ENCODE measurements at regions of chr11 and their contacts with region 1.

Region 1: GRCh38 chr11:14288189-14288935 is 70.6 kb downstream of the RRAS2 start:
- DNase-seq: no peak
- ATAC-seq: peak; percentile 42
- H3K4me3 Mint-ChIP-seq: no peak overlapping the region
- H3K27ac Mint-ChIP-seq: no peak overlapping the region
- H3K4me1 Mint-ChIP-seq: peaks cover 5% of the 10 kb centered on the region
- H3K27me3 Mint-ChIP-seq: no peaks in the 10 kb centered on the region

Region 2: DNA sequence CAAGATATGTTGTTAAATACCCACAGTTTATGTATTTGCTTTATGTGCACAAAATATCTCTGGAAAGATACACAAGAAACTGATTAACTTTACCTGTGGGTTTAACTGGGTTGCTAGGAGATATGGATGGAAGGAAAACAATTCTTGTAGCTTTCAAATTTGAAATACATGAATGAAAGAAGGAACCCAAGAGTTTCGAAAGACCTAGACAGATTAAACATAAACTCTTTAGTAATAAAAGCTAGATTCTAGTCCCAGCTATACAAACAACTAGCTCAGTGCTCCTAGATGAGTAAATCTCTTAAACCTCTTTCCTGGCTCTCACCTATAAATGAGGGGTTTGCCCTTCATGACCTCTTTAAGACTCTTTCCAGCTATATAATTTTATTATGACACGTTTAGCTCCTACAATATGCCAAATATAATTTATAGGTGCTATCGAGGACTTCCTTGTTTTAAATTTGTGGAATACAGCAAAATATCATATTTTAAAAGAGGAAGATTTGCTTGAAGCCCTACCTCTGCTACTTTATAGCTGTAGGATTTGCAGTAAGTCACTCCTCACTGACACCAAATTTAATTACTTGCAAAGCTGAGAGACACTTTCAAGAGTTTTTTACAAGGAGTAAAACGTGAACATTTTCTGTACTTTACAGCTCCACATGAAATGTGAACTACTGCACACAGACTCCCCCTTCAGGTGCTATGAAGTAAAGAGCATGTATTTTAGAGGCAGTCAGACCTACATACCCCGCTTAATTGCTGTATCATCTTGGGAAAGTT is 19.9 kb after region 1 on chr11:
- CTCF ChIA-PET with region 1: interaction called, 12 read pairs
- POLR2A ChIA-PET with region 1: interaction called, 3 read pairs
- intact Hi-C with region 1: no loop called
- DNase-seq: no peak
- ATAC-seq: peak; percentile 86
- H3K4me3 Mint-ChIP-seq: no peak overlapping the region
- H3K27ac Mint-ChIP-seq: no peak overlapping the region
- H3K4me1 Mint-ChIP-seq: peaks cover 10% of the 10 kb centered on the region
- H3K27me3 Mint-ChIP-seq: no peaks in the 10 kb centered on the region

Region 3: DNA sequence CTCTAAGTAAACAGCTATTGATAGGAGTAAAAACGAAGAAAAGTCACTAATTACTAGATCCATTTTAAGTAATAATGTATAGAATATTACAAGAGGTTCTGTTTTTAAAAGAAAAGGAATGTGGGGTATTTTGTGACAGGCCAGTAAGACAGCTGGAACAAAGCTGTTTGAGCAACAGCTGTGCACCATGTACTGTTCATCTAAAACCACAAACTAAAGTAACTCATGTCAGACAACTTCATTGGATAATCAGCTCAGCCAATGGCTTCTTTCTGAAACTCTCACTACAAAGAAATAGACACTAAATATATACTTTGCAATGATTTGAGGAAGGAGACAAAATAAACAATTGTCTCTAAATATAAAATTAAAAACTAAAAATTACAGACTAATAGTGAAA is 54.5 kb after region 1 on chr11:
- CTCF ChIA-PET with region 1: no interaction called
- POLR2A ChIA-PET with region 1: no interaction called
- intact Hi-C with region 1: no loop called
- DNase-seq: no peak
- ATAC-seq: no peak
- H3K4me3 Mint-ChIP-seq: no peak overlapping the region
- H3K27ac Mint-ChIP-seq: no peak overlapping the region
- H3K4me1 Mint-ChIP-seq: peaks cover 32% of the 10 kb centered on the region
- H3K27me3 Mint-ChIP-seq: no peaks in the 10 kb centered on the region